ENCODE measurements at regions of chr9 and their contacts with region 1.

Region 1: GRCh38 chr9:121929893-121930875 is 162.9 kb downstream of the TTLL11 start:
- DNase-seq: no peak
- ATAC-seq: peak in 2 of 8 donors; percentile 30 to 57
- H3K4me3 ChIP-seq: no peak overlapping the region
- H3K27ac ChIP-seq: no peak overlapping the region
- H3K4me1 ChIP-seq: peaks cover 0 to 10% (median 0%) of the 10 kb centered on the region in 9 donors
- H3K27me3 ChIP-seq: no peaks in the 10 kb centered on the region
- CTCF ChIP-seq: peak in 5 of 9 donors; percentile 15 to 41 (median 19)

Region 2: GRCh38 chr9:121839726-121840500 is 90.3 kb before region 1 on chr9:
- intact Hi-C with region 1: loop called in 1 of 10 experiments (anchors 5 kb)
- DNase-seq: no peak
- ATAC-seq: no peak
- H3K4me3 ChIP-seq: no peak overlapping the region
- H3K27ac ChIP-seq: no peak overlapping the region
- H3K4me1 ChIP-seq: peaks cover 0 to 21% (median 5%) of the 10 kb centered on the region in 9 donors
- H3K27me3 ChIP-seq: no peaks in the 10 kb centered on the region
- CTCF ChIP-seq: no peak

Region 3: GRCh38 chr9:121888438-121888775 is 41.8 kb before region 1 on chr9:
- intact Hi-C with region 1: loop called in 1 of 10 experiments (anchors 10 kb)
- DNase-seq: no peak
- ATAC-seq: peak in 5 of 8 donors; percentile 18 to 65 (median 48)
- H3K4me3 ChIP-seq: no peak overlapping the region
- H3K27ac ChIP-seq: peak overlapping the region in 3 of 10 donors; percentile 9 to 69 (median 36)
- H3K4me1 ChIP-seq: peaks cover 0 to 23% (median 6%) of the 10 kb centered on the region in 9 donors
- H3K27me3 ChIP-seq: no peaks in the 10 kb centered on the region
- CTCF ChIP-seq: no peak

Region 4: DNA sequence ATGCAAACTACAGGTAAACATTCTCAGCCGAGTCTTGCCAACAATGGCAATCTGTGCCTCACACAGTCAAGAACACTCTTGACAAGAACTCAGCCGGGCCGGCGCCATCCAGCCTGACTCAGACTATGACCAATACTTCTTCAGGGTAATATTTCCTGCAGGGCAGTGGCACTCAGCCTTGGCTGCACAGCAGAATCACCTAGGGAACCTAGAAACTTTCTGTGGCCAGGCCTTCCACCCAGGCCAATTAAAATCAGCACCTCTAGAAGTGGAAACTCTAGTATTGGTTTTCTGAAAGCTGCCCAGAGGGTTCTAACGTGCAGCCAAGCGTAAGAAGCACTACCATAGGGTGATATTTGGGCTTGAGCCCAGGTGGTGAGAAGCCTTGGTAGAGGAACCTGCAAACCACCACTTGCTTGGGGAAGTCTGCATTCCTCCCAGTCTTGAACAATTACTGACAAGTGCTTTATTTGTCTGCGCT is 42.4 kb after region 1 on chr9:
- intact Hi-C with region 1: loop called in 1 of 10 experiments (anchors 10 kb)
- DNase-seq: no peak
- ATAC-seq: peak in 1 of 8 donors; percentile 39
- H3K4me3 ChIP-seq: no peak overlapping the region
- H3K27ac ChIP-seq: no peak overlapping the region
- H3K4me1 ChIP-seq: peaks cover 0 to 3% (median 0%) of the 10 kb centered on the region in 9 donors
- H3K27me3 ChIP-seq: no peaks in the 10 kb centered on the region
- CTCF ChIP-seq: no peak

Region 5: DNA sequence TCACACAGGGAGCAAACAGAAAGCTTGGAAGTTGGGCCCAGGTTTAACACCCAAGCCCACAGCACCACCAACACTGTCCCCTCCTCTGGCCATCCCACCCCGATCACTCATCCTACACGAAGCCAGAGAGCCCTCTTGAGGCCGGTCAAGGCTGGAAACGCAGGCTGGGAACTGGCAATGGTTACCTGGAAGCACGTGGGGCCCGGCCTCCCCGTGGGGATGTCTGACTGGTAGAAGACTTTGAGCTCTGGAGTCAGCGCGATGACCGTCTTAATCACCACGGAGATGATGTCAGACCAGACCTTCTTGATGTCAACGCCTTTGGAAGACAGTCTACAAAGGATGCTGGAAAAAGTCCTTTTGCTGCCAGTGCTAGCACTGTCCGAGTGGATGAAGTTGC is 58.8 kb after region 1 on chr9:
- intact Hi-C with region 1: no loop called
- DNase-seq: no peak
- ATAC-seq: no peak
- H3K4me3 ChIP-seq: no peak overlapping the region
- H3K27ac ChIP-seq: no peak overlapping the region
- H3K4me1 ChIP-seq: peaks cover 9 to 59% (median 30%) of the 10 kb centered on the region in 9 donors
- H3K27me3 ChIP-seq: no peaks in the 10 kb centered on the region
- CTCF ChIP-seq: peak in 4 of 9 donors; percentile 11 to 45 (median 28)

Measured in heart right ventricle (tissue), 16 donors.